ENCODE measurements at regions of chr4 and their contacts with region 1.

Region 1: DNA sequence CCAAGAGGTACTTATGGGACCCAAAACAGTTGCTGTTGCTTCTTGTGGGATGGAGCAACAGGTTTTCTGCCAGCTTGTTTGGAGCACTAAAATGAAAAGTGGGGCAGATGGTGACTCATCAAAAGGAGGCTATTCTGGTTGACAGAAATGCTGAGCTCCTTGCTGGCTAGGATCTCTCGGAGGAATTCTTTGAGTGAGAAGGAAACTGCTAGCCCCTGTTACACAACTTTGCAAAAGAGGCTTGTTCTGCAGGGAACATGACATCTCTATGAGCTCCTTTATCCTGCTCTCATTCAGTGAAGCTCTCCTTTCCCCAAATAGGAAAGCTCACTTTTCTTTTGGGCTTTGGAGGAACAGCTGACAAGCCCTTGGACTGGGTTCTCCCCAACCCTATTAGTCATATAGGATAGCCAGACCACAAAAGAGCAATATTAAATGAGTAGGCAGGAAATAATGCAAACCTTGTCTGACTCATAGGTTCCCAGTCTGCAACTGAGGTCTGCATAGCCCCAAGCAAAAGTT is 108.3 kb downstream of the CDS1 start:
- DNase-seq: peak; percentile 92
- H3K4me3 ChIP-seq: peak overlapping the region in 1 of 3 experiments; percentile 14
- H3K27ac ChIP-seq: peak overlapping the region; percentile 54
- H3K4me1 ChIP-seq: peaks cover 33% of the 10 kb centered on the region
- H3K27me3 ChIP-seq: no peaks in the 10 kb centered on the region
- CTCF ChIP-seq: no peak

Region 2: GRCh38 chr4:84596826-84597225 is 94.4 kb before region 1 on chr4:
- CTCF ChIA-PET with region 1: no interaction called
- dilution Hi-C with region 1: loop called (anchors 5 kb)
- in situ Hi-C with region 1: no loop called
- intact Hi-C with region 1: no loop called
- DNase-seq: peak; percentile 82
- H3K4me3 ChIP-seq: no peak overlapping the region
- H3K27ac ChIP-seq: peak overlapping the region; percentile 87
- H3K4me1 ChIP-seq: peaks cover 19% of the 10 kb centered on the region
- H3K27me3 ChIP-seq: no peaks in the 10 kb centered on the region
- CTCF ChIP-seq: no peak

Region 3: GRCh38 chr4:84632092-84632491 is 59.1 kb before region 1 on chr4:
- CTCF ChIA-PET with region 1: no interaction called
- dilution Hi-C with region 1: no loop called
- in situ Hi-C with region 1: no loop called
- intact Hi-C with region 1: loop called (anchors 5 kb)
- DNase-seq: peak; percentile 79
- H3K4me3 ChIP-seq: peak overlapping the region in 2 of 3 experiments; percentile 15 to 51
- H3K27ac ChIP-seq: peak overlapping the region; percentile 93
- H3K4me1 ChIP-seq: peaks cover 30% of the 10 kb centered on the region
- H3K27me3 ChIP-seq: no peaks in the 10 kb centered on the region
- CTCF ChIP-seq: no peak

Region 4: DNA sequence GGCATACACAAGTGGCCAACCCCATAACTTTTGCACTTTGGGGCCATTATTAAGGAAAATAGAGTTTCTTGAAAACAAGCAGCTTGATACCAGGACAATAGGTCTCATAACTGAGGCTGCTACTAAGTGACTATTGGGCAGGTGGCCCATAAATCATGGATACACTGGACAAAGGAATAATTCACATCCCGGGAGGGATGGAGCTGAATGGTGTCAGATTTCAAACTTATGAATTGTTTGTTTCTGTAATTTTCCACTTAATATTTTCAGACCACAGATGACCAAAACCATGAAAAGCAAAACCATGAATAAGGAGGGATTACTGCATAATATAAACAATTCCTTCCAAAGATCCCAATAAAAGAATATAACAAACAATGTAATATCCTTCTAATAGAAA is 160.8 kb after region 1 on chr4:
- CTCF ChIA-PET with region 1: no interaction called
- dilution Hi-C with region 1: no loop called
- in situ Hi-C with region 1: no loop called
- intact Hi-C with region 1: no loop called
- DNase-seq: peak; percentile 57
- H3K4me3 ChIP-seq: no peak overlapping the region
- H3K27ac ChIP-seq: no peak overlapping the region
- H3K4me1 ChIP-seq: peaks cover 3% of the 10 kb centered on the region
- H3K27me3 ChIP-seq: no peaks in the 10 kb centered on the region
- CTCF ChIP-seq: no peak

Measured in mammary epithelial cell (primary cell).